CD4-positive, alpha-beta T cell (primary cell): ENCODE measurements at regions of chr22 and their contacts with region 1.

Region 1: GRCh38 chr22:27241430-27242321 is 559.9 kb downstream of the MN1 start:
- DNase-seq: no peak
- ATAC-seq: no peak
- H3K4me3 ChIP-seq: no peak overlapping the region
- H3K4me3 Mint-ChIP-seq: no peak overlapping the region
- H3K27ac ChIP-seq: no peak overlapping the region
- H3K27ac Mint-ChIP-seq: no peak overlapping the region
- H3K4me1 ChIP-seq: no peaks in the 10 kb centered on the region
- H3K4me1 Mint-ChIP-seq: peaks cover 5% of the 10 kb centered on the region
- H3K27me3 ChIP-seq: no peaks in the 10 kb centered on the region
- H3K27me3 Mint-ChIP-seq: peaks cover 20% of the 10 kb centered on the region
- CTCF ChIP-seq: no peak

Region 2: DNA sequence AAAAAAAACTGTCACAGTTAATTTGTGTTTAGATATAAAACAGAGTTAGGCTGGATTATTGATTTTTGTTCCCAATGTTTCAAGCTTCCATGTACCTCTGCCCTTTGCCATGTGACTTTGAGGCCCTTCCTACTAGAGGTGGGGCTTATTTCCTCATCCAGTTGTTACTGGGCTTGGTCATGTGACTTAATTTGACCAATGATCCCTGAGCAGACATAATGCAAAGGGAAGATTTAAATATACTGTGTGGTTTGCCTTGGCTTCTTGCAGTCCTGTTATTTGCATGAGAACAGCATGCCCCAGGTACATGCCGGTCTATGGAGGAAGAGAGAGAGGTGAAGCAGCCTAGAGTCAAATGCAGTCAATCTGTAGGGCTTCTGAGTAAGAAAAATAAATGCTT is 237.2 kb before region 1 on chr22:
- CTCF ChIA-PET with region 1: no interaction called
- POLR2A ChIA-PET with region 1: no interaction called
- intact Hi-C with region 1: no loop called
- DNase-seq: no peak
- ATAC-seq: no peak
- H3K4me3 ChIP-seq: no peak overlapping the region
- H3K4me3 Mint-ChIP-seq: no peak overlapping the region
- H3K27ac ChIP-seq: no peak overlapping the region
- H3K27ac Mint-ChIP-seq: no peak overlapping the region
- H3K4me1 ChIP-seq: no peaks in the 10 kb centered on the region
- H3K4me1 Mint-ChIP-seq: no peaks in the 10 kb centered on the region
- H3K27me3 ChIP-seq: peaks cover 0 to 7% of the 10 kb centered on the region in 2 experiments
- H3K27me3 Mint-ChIP-seq: no peaks in the 10 kb centered on the region
- CTCF ChIP-seq: no peak

Region 3: DNA sequence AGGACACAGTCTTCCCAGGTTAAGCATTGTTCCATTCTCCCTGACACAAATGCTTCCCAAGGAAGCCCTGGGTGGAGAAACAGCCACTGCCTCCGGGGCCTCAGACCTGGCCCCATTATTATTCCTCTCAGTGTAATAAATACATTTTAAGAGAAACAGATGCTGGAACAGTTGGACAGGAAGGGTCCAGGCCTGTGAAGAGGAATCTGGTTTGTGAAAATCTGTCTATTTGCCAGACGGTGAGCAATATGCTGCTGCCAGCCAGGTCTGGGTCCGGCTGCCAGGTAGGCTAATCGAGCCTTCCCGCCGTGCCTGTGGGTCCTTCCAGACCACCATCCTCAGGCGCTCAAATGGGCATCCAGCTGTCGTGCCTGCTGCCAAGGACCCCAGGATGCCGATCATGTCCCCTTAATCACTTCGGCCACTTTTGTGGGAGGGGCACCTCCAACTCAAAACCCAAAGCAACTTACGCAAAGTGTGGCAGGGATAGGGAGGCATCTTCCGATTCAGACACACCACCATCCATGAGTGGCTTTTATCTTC is 55.8 kb before region 1 on chr22:
- CTCF ChIA-PET with region 1: no interaction called
- POLR2A ChIA-PET with region 1: no interaction called
- intact Hi-C with region 1: loop called in 1 of 2 experiments (anchors 10 kb)
- DNase-seq: no peak
- ATAC-seq: no peak
- H3K4me3 ChIP-seq: no peak overlapping the region
- H3K4me3 Mint-ChIP-seq: no peak overlapping the region
- H3K27ac ChIP-seq: no peak overlapping the region
- H3K27ac Mint-ChIP-seq: no peak overlapping the region
- H3K4me1 ChIP-seq: no peaks in the 10 kb centered on the region
- H3K4me1 Mint-ChIP-seq: no peaks in the 10 kb centered on the region
- H3K27me3 ChIP-seq: peaks cover 0 to 4% of the 10 kb centered on the region in 2 experiments
- H3K27me3 Mint-ChIP-seq: peaks cover 15% of the 10 kb centered on the region
- CTCF ChIP-seq: no peak

Region 4: DNA sequence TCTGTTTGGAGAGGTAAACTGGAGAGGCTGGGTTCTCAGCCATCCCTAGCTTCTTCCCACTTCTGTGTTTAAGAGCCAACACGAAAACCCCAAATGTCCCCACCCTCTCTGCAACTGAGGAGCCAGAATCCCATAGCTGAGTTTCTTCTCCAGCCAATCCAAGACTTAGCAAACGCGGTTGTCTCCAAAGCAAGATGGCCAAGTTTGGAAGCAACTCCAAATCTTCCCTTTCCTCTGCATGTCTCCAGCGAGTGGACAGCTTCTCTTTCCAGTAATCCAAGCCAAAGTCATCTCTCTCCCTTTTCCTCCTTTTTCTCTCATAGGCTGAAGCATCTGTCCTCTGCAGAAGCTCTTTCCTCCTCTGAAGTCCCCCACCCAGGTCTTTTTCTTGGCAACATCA is 45.1 kb before region 1 on chr22:
- CTCF ChIA-PET with region 1: no interaction called
- POLR2A ChIA-PET with region 1: no interaction called
- intact Hi-C with region 1: no loop called
- DNase-seq: no peak
- ATAC-seq: no peak
- H3K4me3 ChIP-seq: no peak overlapping the region
- H3K4me3 Mint-ChIP-seq: no peak overlapping the region
- H3K27ac ChIP-seq: no peak overlapping the region
- H3K27ac Mint-ChIP-seq: no peak overlapping the region
- H3K4me1 ChIP-seq: no peaks in the 10 kb centered on the region
- H3K4me1 Mint-ChIP-seq: no peaks in the 10 kb centered on the region
- H3K27me3 ChIP-seq: peaks cover 0 to 4% of the 10 kb centered on the region in 2 experiments
- H3K27me3 Mint-ChIP-seq: peaks cover 24% of the 10 kb centered on the region
- CTCF ChIP-seq: no peak